Endothelial cell of umbilical vein (primary cell): ENCODE measurements at regions of chr17 and their contacts with region 1.

Region 1: GRCh38 chr17:17041571-17042380 is 481 bp upstream of the MPRIP start:
- DNase-seq: peak; percentile 96
- H3K4me3 ChIP-seq: peak overlapping the region; percentile 24 to 63 (median 35)
- H3K27ac ChIP-seq: no peak overlapping the region
- H3K4me1 ChIP-seq: peaks cover 28% of the 10 kb centered on the region
- H3K27me3 ChIP-seq: no peaks in the 10 kb centered on the region
- CTCF ChIP-seq: no peak
- POLR2A ChIP-seq: no peak

Region 2: GRCh38 chr17:17051791-17052461 is 10.2 kb after region 1 on chr17:
- CTCF ChIA-PET with region 1: interaction called, 8 read pairs
- POLR2A ChIA-PET with region 1: no interaction called
- dilution Hi-C with region 1: no loop called
- intact Hi-C with region 1: loop called (anchors 1 kb)
- DNase-seq: no peak
- H3K4me3 ChIP-seq: no peak overlapping the region
- H3K27ac ChIP-seq: no peak overlapping the region
- H3K4me1 ChIP-seq: peaks cover 19% of the 10 kb centered on the region
- H3K27me3 ChIP-seq: no peaks in the 10 kb centered on the region
- CTCF ChIP-seq: no peak
- POLR2A ChIP-seq: no peak

Region 3: GRCh38 chr17:17075038-17075781 is 33.4 kb after region 1 on chr17:
- CTCF ChIA-PET with region 1: no interaction called
- POLR2A ChIA-PET with region 1: no interaction called
- dilution Hi-C with region 1: no loop called
- intact Hi-C with region 1: loop called (anchors 2 kb)
- DNase-seq: peak; percentile 66
- H3K4me3 ChIP-seq: no peak overlapping the region
- H3K27ac ChIP-seq: peak overlapping the region; percentile 70
- H3K4me1 ChIP-seq: peaks cover 23% of the 10 kb centered on the region
- H3K27me3 ChIP-seq: no peaks in the 10 kb centered on the region
- CTCF ChIP-seq: no peak
- POLR2A ChIP-seq: no peak

Region 4: DNA sequence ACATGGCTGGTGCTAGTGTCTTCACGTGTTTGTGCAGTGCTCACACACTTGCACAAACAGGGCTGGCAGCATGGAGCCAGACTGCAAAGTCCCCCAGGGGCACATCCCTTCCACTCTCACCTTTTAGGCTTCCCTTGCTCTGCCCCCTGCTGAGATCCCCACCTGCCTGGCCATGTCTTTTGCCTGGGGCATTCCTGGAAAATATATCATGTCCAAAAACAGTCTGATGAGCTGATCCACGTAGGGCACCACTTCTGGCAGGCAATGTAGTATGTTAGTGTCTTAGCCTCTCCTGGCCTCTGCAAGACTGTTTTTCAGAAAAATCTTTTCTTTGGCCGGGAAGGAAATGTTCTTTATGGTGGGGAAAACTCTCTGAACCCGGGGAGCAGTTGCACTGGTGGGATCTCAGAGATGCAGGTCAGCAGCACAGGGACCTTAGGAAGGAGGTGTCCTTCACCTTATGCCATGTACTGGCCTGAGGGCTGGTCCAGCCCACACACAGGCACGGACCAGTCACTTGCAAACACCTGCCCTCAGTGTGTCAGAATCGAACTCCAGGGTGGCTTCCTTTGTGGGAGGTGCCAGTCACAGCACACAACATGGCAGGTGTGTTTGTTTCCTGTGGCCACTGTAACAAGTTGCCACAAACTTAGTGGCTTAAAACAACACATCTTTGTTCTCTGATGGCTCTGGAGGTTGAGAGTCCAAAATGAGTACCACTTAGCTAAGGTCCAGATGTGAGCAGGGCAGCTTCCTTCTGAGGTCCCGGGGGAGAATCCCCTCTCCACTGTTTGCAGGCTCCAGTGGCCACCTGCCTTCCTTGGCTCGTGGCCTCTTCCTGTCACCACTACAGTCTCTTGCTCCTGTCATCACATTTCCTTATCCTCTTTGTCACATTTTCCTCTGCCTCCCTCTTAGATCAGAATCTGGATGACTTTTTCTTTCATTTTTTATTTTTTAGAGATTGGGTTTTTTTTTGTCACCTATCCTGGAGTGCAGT is 47.0 kb after region 1 on chr17:
- CTCF ChIA-PET with region 1: no interaction called
- POLR2A ChIA-PET with region 1: no interaction called
- dilution Hi-C with region 1: no loop called
- intact Hi-C with region 1: no loop called
- DNase-seq: no peak
- H3K4me3 ChIP-seq: no peak overlapping the region
- H3K27ac ChIP-seq: no peak overlapping the region
- H3K4me1 ChIP-seq: no peaks in the 10 kb centered on the region
- H3K27me3 ChIP-seq: no peaks in the 10 kb centered on the region
- CTCF ChIP-seq: no peak
- POLR2A ChIP-seq: no peak